ENCODE measurements at regions of chr11 and their contacts with region 1.

Region 1: GRCh38 chr11:63023841-63024648 is 8.4 kb upstream of the SLC22A8 start:
- DNase-seq: peak; percentile 29 to 97
- H3K4me3 ChIP-seq: no peak overlapping the region
- H3K27ac ChIP-seq: no peak overlapping the region
- H3K4me1 ChIP-seq: peaks cover 0 to 7% (median 4%) of the 10 kb centered on the region in 4 experiments; a peak in 5 of 7 replicates
- H3K27me3 ChIP-seq: peaks cover 0 to 4% (median 2%) of the 10 kb centered on the region in 4 experiments; a peak in 3 of 7 replicates
- CTCF ChIP-seq: peak; percentile 95 to 98 (median 96)
- EP300 ChIP-seq: no peak
- POLR2A ChIP-seq: no peak
- RAD21 ChIP-seq: peak; percentile 84 to 87

Region 2: GRCh38 chr11:62880803-62881578 is 143.1 kb before region 1 on chr11 and contains the start of gene SLC3A2:
- CTCF ChIA-PET with region 1: interaction called, 11 read pairs
- POLR2A ChIA-PET with region 1: interaction called, 4 read pairs
- DNase-seq: peak; percentile 56 to 88
- H3K4me3 ChIP-seq: peak within 1 kb of the TSS; percentile 67 to 97 (median 88)
- H3K27ac ChIP-seq: peak within 1 kb of the TSS; percentile 98
- H3K4me1 ChIP-seq: peaks cover 0 to 30% (median 12%) of the 10 kb centered on the region in 4 experiments; a peak in 5 of 7 replicates
- H3K27me3 ChIP-seq: no peaks in the 10 kb centered on the region
- CTCF ChIP-seq: peak; percentile 60 to 82 (median 71)
- EP300 ChIP-seq: no peak
- POLR2A ChIP-seq: peak; percentile 97 to 99
- RAD21 ChIP-seq: peak; percentile 39 to 55
- total RNA-seq, gene SLC3A2: 393 and 410 TPM in 2 replicates

Region 3: DNA sequence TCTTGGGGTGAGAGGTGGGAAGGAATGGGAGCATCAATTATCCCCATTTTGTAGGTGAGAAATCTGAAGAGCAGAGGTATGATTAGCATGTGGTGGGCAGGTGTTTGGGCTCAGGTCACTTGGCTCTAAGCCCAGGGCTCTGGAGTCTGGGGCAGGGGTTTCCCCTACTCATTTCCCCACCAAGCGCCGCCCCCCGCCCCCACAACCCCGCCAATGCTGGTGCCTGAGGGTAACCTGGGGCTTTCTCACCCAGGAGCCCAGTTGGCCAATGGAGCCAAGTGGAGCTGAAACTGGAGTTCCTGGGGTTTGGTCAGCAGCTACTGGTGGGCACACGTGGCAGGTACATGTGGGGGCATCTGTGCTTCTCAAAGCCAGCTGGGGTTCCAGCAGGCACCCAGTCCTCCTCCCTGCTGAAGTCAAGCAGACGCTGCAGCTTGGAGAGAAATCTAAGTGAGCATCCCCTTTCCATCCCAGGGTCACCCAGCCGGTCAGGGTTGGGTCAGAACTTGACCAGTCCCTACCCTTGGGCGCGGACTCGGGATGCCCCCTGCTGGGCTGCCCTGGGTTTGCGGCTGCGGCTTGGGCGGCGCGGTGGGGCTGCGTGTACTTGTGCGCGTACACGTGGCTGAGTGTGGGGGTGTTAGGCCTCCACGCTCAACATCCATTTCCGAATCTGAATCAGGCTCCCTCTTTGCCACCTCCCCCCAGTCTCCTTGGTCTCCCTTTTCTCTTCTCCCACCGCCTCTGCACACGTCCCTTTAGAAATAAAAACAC is 101.2 kb before region 1 on chr11:
- CTCF ChIA-PET with region 1: interaction called, 232 read pairs
- POLR2A ChIA-PET with region 1: interaction called, 5 read pairs
- DNase-seq: peak in 1 of 2 experiments; percentile 87
- H3K4me3 ChIP-seq: peak overlapping the region; percentile 3 to 64 (median 16); a peak in 4 of 8 replicates
- H3K27ac ChIP-seq: no peak overlapping the region
- H3K4me1 ChIP-seq: peaks cover 6 to 35% (median 21%) of the 10 kb centered on the region in 4 experiments
- H3K27me3 ChIP-seq: peaks cover 15 to 45% (median 41%) of the 10 kb centered on the region in 4 experiments
- CTCF ChIP-seq: peak; percentile 62 to 79 (median 69)
- EP300 ChIP-seq: no peak
- POLR2A ChIP-seq: no peak
- RAD21 ChIP-seq: peak; percentile 60 to 76

Region 4: DNA sequence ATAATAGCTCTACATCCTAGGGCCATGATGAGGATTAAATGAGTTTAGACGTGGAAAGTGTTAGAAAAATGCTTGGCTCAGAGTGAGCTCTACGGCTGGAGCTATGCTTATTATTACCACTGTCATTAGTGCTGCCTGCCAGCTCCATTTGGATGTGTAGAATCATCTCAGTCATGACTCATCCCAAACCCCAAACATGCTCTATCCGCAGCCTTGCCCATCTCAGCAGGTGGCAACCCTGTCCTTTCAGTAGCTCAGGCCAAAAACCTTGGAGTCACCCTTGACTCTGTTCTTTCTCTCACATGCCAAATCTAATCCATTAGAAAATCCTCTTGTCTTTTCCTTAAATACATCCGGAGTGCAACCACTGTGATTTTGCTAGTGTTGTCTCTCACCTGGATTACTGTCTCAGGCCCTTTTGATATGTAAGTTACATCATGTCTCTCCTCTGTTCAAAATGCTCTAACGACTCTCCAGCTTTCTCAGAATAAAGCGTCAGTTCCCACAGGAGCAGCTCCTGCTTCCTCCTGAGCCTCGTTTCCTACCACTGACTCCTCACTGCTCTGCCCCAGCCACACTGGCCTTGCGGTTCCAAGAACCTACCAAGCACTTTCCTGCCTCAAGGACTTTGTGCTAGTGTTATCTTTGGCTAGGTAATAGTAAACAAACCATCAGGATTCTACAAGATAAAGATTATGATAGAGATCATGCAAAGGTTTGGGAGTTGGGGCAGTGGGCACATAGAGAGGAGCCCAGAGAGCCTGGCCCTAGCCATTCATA is 92.4 kb before region 1 on chr11:
- CTCF ChIA-PET with region 1: interaction called, 232 read pairs
- POLR2A ChIA-PET with region 1: interaction called, 3 read pairs
- DNase-seq: no peak
- H3K4me3 ChIP-seq: no peak overlapping the region
- H3K27ac ChIP-seq: no peak overlapping the region
- H3K4me1 ChIP-seq: peaks cover 6 to 14% (median 9%) of the 10 kb centered on the region in 4 experiments; a peak in 5 of 7 replicates
- H3K27me3 ChIP-seq: peaks cover 10 to 26% (median 21%) of the 10 kb centered on the region in 4 experiments
- CTCF ChIP-seq: no peak
- EP300 ChIP-seq: no peak
- POLR2A ChIP-seq: no peak
- RAD21 ChIP-seq: no peak

Region 5: GRCh38 chr11:62948765-62949320 is 75.2 kb before region 1 on chr11:
- CTCF ChIA-PET with region 1: interaction called, 20 read pairs
- POLR2A ChIA-PET with region 1: no interaction called
- DNase-seq: no peak
- H3K4me3 ChIP-seq: no peak overlapping the region
- H3K27ac ChIP-seq: no peak overlapping the region
- H3K4me1 ChIP-seq: no peaks in the 10 kb centered on the region
- H3K27me3 ChIP-seq: no peaks in the 10 kb centered on the region
- CTCF ChIP-seq: no peak
- EP300 ChIP-seq: no peak
- POLR2A ChIP-seq: no peak
- RAD21 ChIP-seq: no peak

Region 6: GRCh38 chr11:62999649-63000048 is 24.4 kb before region 1 on chr11:
- CTCF ChIA-PET with region 1: interaction called, 149 read pairs
- POLR2A ChIA-PET with region 1: interaction called, 3 read pairs
- DNase-seq: no peak
- H3K4me3 ChIP-seq: no peak overlapping the region
- H3K27ac ChIP-seq: no peak overlapping the region
- H3K4me1 ChIP-seq: no peaks in the 10 kb centered on the region; a peak in 1 of 7 replicates
- H3K27me3 ChIP-seq: no peaks in the 10 kb centered on the region
- CTCF ChIP-seq: no peak
- EP300 ChIP-seq: no peak
- POLR2A ChIP-seq: no peak
- RAD21 ChIP-seq: no peak

Region 7: DNA sequence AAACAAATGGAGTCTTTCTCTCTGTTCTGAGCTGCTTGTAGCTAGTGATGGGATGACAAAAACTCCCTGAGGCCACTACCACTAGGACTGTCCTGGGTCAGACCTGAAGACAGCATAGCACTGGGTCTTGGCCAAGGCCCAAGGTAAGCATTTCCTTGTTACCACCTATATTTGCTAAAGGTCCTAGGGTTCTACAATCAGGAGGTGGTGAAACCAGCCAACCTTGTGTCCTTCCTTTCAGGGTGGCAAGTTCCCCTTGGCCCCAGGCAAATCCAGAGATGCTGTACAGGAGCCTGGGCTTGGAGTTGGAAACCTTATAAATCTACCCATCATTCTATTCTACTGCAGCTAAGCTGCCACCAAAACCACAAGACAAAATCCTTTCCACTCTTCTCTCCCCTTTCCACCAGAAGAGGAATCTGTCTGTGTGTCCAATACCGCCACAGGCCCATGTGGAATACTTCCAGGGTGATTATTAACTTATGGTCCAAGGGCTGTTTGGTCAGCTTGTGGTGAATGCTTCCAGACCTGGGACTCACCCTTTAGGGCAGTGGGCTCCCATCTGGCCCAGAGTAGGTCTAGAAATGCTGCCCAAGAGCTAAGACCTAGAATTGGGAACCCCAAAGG is 202.6 kb after region 1 on chr11:
- CTCF ChIA-PET with region 1: no interaction called
- POLR2A ChIA-PET with region 1: no interaction called
- DNase-seq: no peak
- H3K4me3 ChIP-seq: no peak overlapping the region
- H3K27ac ChIP-seq: no peak overlapping the region
- H3K4me1 ChIP-seq: no peaks in the 10 kb centered on the region
- H3K27me3 ChIP-seq: no peaks in the 10 kb centered on the region
- CTCF ChIP-seq: no peak
- EP300 ChIP-seq: no peak
- POLR2A ChIP-seq: no peak
- RAD21 ChIP-seq: no peak